Common myeloid progenitor, CD34-positive (primary cell): ENCODE measurements at regions of chr17 and their contacts with region 1.

Region 1: GRCh38 chr17:16521070-16521727 is 29.2 kb upstream of the LRRC75A start:
- DNase-seq: peak; percentile 88 to 95 (median 92)
- H3K4me3 ChIP-seq: peak overlapping the region in 1 of 7 experiments; percentile 6
- H3K27ac ChIP-seq: no peak overlapping the region
- H3K4me1 ChIP-seq: peaks cover 0 to 4% (median 3%) of the 10 kb centered on the region in 4 experiments
- H3K27me3 ChIP-seq: peaks cover 0 to 12% (median 0%) of the 10 kb centered on the region in 5 experiments

Region 2: GRCh38 chr17:16322636-16323035 is 198.6 kb before region 1 on chr17:
- CTCF ChIA-PET with region 1: no interaction called
- POLR2A ChIA-PET with region 1: no interaction called
- DNase-seq: no peak
- H3K4me3 ChIP-seq: no peak overlapping the region
- H3K27ac ChIP-seq: no peak overlapping the region
- H3K4me1 ChIP-seq: no peaks in the 10 kb centered on the region
- H3K27me3 ChIP-seq: no peaks in the 10 kb centered on the region

Region 3: GRCh38 chr17:16496820-16497489 is 24.2 kb before region 1 on chr17:
- CTCF ChIA-PET with region 1: interaction called, 10 read pairs
- POLR2A ChIA-PET with region 1: no interaction called
- DNase-seq: no peak
- H3K4me3 ChIP-seq: no peak overlapping the region
- H3K27ac ChIP-seq: no peak overlapping the region
- H3K4me1 ChIP-seq: peaks cover 0 to 7% (median 4%) of the 10 kb centered on the region in 4 experiments
- H3K27me3 ChIP-seq: peaks cover 0 to 22% (median 3%) of the 10 kb centered on the region in 5 experiments

Region 4: GRCh38 chr17:16537130-16537458 is 15.9 kb after region 1 on chr17:
- CTCF ChIA-PET with region 1: interaction called, 11 read pairs
- POLR2A ChIA-PET with region 1: no interaction called
- DNase-seq: no peak
- H3K4me3 ChIP-seq: peak overlapping the region in 4 of 7 experiments; percentile 76 to 94 (median 88)
- H3K27ac ChIP-seq: no peak overlapping the region
- H3K4me1 ChIP-seq: peaks cover 2 to 16% (median 10%) of the 10 kb centered on the region in 4 experiments
- H3K27me3 ChIP-seq: no peaks in the 10 kb centered on the region